ENCODE measurements at regions of chr6 and their contacts with region 1.

Region 1: DNA sequence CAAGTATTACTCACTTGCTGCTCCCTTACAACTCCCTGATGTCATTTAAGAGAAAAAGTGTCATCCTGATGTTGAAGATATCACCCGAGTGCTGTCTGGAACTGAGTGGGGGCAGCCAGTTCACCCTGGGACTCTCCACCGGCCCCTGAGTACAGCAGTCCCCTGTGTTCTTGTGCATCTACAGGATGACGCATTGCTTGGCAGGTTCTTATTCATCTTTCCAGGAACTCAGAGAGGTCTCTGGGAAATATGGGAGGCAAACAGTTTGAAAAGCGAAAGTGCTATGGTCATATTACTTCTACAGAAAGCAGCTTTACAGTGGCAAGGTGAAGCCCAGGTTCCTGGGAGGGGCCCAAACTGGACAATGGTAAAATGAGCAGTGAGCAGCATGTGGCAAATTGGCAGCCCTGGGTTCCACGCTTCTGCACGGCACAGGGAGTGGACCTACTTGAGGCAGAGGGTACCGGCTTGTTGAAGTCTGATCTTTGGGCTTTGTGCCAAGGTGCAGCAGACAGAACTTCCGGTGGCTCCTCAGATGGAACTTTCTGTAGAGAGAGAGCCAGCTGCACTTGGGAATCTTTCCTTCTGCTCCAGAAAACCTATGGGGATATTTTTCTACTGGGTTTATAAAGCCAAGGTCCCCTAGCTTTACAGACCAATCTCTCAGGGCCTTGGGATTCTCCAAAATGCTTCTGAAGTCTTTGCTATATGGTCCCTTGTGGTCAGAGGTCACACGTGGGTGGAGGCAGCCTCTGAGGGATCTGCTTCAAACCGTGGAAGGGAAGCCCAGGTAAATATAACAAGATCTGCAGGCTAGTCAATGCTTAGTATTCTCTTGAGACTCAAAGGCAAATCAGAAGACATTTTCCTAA is 128.3 kb downstream of the MAP3K7 start:
- DNase-seq: peak; percentile 94
- H3K4me3 Mint-ChIP-seq: peak overlapping the region; percentile 40
- H3K27ac Mint-ChIP-seq: peak overlapping the region; percentile 95
- H3K4me1 Mint-ChIP-seq: peaks cover 87% of the 10 kb centered on the region
- H3K27me3 Mint-ChIP-seq: no peaks in the 10 kb centered on the region

Region 2: GRCh38 chr6:90319044-90319443 is 139.5 kb before region 1 on chr6:
- CTCF ChIA-PET with region 1: no interaction called
- POLR2A ChIA-PET with region 1: no interaction called
- intact Hi-C with region 1: loop called (anchors 1 kb)
- DNase-seq: peak; percentile 51
- H3K4me3 Mint-ChIP-seq: no peak overlapping the region
- H3K27ac Mint-ChIP-seq: peak overlapping the region; percentile 59
- H3K4me1 Mint-ChIP-seq: peaks cover 29% of the 10 kb centered on the region
- H3K27me3 Mint-ChIP-seq: peaks cover 3% of the 10 kb centered on the region

Region 3: DNA sequence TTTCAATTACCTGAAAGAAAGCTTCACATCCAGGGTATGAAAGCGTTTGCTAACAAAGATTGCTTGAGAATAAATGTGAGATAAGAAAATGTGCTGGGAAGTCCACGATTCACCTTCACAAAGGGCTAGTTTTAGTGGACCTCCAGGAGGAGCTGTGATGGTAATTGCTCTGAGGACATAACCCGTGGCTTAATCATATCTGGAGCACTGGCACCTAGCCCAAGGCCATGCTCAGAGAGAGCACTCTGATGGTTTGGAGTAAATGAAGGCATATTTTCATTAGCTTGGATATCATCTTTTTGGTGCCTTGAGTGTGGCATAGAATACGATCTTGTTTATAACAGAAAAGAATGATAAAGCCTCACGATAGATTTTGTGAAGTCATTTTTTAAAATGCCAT is 115.0 kb before region 1 on chr6:
- CTCF ChIA-PET with region 1: no interaction called
- POLR2A ChIA-PET with region 1: no interaction called
- intact Hi-C with region 1: no loop called
- DNase-seq: no peak
- H3K4me3 Mint-ChIP-seq: no peak overlapping the region
- H3K27ac Mint-ChIP-seq: no peak overlapping the region
- H3K4me1 Mint-ChIP-seq: peaks cover 17% of the 10 kb centered on the region
- H3K27me3 Mint-ChIP-seq: no peaks in the 10 kb centered on the region

Region 4: DNA sequence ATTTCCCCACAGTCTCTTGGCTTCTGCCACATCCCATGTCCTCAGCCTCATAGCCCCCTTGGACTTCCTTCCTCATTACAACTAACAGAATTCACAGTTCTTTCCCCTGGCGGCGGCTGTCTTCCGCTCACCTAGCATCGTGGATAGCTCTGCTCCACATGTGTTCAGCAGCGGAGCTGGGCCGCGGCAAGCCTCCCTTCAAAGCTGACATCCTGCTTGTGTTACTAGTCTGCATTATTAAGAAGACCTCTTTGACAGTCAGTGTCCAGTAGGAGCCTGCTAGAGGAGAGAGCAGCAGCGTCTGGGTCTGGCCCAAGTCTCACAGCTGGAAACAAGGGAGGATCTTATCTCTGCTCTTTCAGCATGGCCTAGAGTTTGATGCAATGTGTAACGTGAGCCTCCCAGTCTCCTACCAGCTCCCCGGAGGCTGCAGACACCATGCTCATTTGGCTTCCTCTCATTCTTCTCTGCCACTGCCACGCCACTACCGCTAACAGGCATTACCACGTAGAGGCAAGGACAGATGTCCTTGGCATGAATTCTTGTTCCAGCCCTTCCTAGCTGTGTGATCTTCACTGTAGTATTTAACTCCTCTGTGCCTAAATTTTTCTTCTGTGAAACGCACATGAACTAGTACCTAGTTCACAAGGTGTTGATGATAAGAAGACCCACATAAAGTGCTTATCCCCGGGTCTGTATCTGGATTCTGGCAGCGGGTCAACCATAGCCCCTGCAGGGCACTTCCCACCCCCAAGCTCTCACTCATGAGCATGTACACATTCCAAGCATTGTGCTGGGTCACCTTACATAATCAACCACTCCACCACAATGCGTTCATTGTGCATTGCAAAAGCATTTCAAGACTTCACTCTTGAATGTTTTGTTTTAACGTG is 54.9 kb before region 1 on chr6:
- CTCF ChIA-PET with region 1: interaction called, 5 read pairs
- POLR2A ChIA-PET with region 1: interaction called, 98 read pairs
- intact Hi-C with region 1: loop called (anchors 1 kb)
- DNase-seq: no peak
- H3K4me3 Mint-ChIP-seq: peak overlapping the region; percentile 64
- H3K27ac Mint-ChIP-seq: peak overlapping the region; percentile 93
- H3K4me1 Mint-ChIP-seq: peaks cover 81% of the 10 kb centered on the region
- H3K27me3 Mint-ChIP-seq: no peaks in the 10 kb centered on the region

Region 5: DNA sequence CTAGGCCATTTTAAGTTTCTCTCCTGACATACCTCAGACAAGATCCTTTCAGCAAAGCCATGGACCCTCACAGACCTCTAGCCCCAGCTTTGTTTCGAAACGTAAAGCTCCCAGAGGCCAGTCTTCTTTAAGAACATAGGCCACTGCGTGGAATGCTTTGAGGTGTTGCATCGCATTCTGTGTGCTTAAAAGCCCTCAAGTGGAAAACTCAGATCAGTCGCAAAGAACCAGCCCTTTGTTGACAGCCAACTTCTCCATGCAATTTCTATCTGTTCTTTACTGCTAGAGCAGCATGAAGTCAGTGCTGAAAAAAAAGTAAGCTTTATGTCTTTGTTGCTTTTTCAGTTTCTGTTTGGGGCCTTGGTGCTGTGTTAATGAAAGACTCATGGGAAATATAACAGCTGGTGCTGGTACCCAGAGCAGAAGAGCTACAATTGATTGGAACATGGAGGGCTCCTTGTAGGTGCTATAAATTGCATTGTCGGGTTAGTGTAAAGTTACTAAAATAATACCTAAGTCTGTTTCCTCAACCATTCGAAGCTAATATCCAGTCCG is 14.4 kb before region 1 on chr6:
- CTCF ChIA-PET with region 1: interaction called, 3 read pairs
- POLR2A ChIA-PET with region 1: interaction called, 4 read pairs
- intact Hi-C with region 1: loop called (anchors 1 kb)
- DNase-seq: no peak
- H3K4me3 Mint-ChIP-seq: peak overlapping the region; percentile 48
- H3K27ac Mint-ChIP-seq: peak overlapping the region; percentile 92
- H3K4me1 Mint-ChIP-seq: peaks cover 47% of the 10 kb centered on the region
- H3K27me3 Mint-ChIP-seq: no peaks in the 10 kb centered on the region

Region 6: DNA sequence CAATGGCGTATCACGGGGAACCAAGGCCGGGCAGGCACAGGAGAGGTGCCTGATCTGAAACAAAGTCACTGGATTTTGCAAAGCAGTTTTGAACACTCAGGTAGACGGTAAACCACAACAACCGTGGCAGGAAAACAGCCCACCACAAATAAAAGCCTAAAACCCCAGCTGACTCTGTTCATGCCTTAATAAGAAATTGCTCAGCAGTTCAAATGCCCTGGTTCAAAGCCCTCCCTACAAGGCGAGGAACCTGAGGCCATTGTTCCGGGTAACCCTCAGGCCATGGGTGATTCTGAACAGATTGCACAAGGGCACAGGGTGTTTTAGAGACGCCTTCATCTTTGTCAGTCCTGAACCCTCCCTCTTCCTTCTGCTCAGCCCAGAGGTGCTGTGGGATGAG is 14.2 kb after region 1 on chr6:
- CTCF ChIA-PET with region 1: interaction called, 54 read pairs
- POLR2A ChIA-PET with region 1: interaction called, 26 read pairs
- intact Hi-C with region 1: loop called (anchors 1 kb)
- DNase-seq: peak; percentile 69
- H3K4me3 Mint-ChIP-seq: peak overlapping the region; percentile 54
- H3K27ac Mint-ChIP-seq: peak overlapping the region; percentile 83
- H3K4me1 Mint-ChIP-seq: peaks cover 88% of the 10 kb centered on the region
- H3K27me3 Mint-ChIP-seq: peaks cover 1% of the 10 kb centered on the region

Region 7: DNA sequence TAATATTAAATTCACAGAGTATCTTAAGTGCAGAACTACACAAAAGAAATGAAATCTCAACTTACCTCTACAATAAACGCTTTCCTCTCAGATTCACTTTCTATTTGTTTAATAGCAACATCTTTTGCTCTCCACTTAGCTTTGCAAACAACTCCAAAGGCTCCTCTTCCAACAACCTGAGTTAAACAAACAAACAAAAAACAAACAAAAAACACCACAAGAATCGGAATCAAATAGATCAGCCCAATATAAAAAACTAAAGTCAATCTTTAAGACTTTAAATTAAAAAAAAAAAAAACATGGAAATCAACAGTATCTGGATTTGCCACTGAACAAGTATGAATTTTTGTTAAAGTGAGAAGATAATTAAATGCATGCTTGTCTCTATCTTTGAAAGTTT is 113.0 kb after region 1 on chr6:
- CTCF ChIA-PET with region 1: no interaction called
- POLR2A ChIA-PET with region 1: no interaction called
- intact Hi-C with region 1: no loop called
- DNase-seq: no peak
- H3K4me3 Mint-ChIP-seq: no peak overlapping the region
- H3K27ac Mint-ChIP-seq: no peak overlapping the region
- H3K4me1 Mint-ChIP-seq: peaks cover 5% of the 10 kb centered on the region
- H3K27me3 Mint-ChIP-seq: no peaks in the 10 kb centered on the region